Caco-2 (cell line): ENCODE measurements at regions of chr7 and their contacts with region 1.

Region 1: GRCh38 chr7:55086413-55087201 is 67.8 kb downstream of the EGFR start:
- DNase-seq: no peak
- H3K4me3 ChIP-seq: no peak overlapping the region
- H3K4me3 Mint-ChIP-seq: no peak overlapping the region
- H3K27ac Mint-ChIP-seq: no peak overlapping the region
- H3K4me1 ChIP-seq: peaks cover 5% of the 10 kb centered on the region; the same call in 1 of the 2 replicates
- H3K4me1 Mint-ChIP-seq: peaks cover 15% of the 10 kb centered on the region
- H3K27me3 ChIP-seq: no peaks in the 10 kb centered on the region
- H3K27me3 Mint-ChIP-seq: no peaks in the 10 kb centered on the region
- CTCF ChIP-seq: no peak

Region 2: GRCh38 chr7:54969190-54969971 is 117.2 kb before region 1 on chr7:
- CTCF ChIA-PET with region 1: no interaction called
- POLR2A ChIA-PET with region 1: no interaction called
- intact Hi-C with region 1: no loop called
- DNase-seq: no peak
- H3K4me3 ChIP-seq: no peak overlapping the region
- H3K4me3 Mint-ChIP-seq: no peak overlapping the region
- H3K27ac Mint-ChIP-seq: peak overlapping the region; percentile 32
- H3K4me1 ChIP-seq: peaks cover 25% of the 10 kb centered on the region
- H3K4me1 Mint-ChIP-seq: peaks cover 23% of the 10 kb centered on the region
- H3K27me3 ChIP-seq: no peaks in the 10 kb centered on the region
- H3K27me3 Mint-ChIP-seq: no peaks in the 10 kb centered on the region
- CTCF ChIP-seq: no peak

Region 3: DNA sequence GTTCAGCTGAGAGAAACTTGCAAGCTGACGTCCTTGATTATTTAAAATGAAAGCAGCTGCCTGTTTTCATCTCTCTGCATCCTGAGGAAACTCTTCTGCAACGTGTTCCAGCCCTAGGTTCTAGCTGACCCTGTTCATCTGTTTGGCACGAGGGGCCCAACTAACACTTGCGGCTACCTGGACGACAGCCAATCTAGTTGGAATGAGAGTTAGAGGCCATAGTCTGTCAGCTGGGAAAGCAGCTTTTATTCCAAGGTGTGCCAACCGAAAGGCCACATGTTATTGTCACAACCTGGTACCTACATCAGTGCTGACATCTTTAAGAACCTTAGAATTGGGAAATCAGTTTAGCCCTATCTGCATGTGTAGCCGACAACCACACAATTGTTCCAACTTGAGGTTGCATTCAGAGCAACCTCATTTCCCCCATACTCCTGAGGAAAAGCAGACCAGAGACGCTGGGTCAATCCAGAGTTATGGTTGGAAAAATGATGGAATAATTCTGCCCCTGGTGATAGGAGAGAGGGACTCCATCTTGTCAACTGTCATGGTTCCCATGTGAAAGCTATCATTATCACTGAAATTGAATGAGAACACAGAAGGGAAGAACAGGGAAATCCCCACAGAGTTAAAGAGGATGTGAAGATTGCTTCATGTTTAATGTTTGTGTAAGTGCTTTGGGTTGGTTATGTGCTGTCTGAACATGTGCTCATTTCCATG is 53.8 kb after region 1 on chr7:
- CTCF ChIA-PET with region 1: interaction called, 11 read pairs
- POLR2A ChIA-PET with region 1: no interaction called
- intact Hi-C with region 1: no loop called
- DNase-seq: no peak
- H3K4me3 ChIP-seq: no peak overlapping the region
- H3K4me3 Mint-ChIP-seq: no peak overlapping the region
- H3K27ac Mint-ChIP-seq: no peak overlapping the region
- H3K4me1 ChIP-seq: no peaks in the 10 kb centered on the region; the same call in 1 of the 2 replicates
- H3K4me1 Mint-ChIP-seq: no peaks in the 10 kb centered on the region
- H3K27me3 ChIP-seq: no peaks in the 10 kb centered on the region
- H3K27me3 Mint-ChIP-seq: no peaks in the 10 kb centered on the region
- CTCF ChIP-seq: no peak

Region 4: DNA sequence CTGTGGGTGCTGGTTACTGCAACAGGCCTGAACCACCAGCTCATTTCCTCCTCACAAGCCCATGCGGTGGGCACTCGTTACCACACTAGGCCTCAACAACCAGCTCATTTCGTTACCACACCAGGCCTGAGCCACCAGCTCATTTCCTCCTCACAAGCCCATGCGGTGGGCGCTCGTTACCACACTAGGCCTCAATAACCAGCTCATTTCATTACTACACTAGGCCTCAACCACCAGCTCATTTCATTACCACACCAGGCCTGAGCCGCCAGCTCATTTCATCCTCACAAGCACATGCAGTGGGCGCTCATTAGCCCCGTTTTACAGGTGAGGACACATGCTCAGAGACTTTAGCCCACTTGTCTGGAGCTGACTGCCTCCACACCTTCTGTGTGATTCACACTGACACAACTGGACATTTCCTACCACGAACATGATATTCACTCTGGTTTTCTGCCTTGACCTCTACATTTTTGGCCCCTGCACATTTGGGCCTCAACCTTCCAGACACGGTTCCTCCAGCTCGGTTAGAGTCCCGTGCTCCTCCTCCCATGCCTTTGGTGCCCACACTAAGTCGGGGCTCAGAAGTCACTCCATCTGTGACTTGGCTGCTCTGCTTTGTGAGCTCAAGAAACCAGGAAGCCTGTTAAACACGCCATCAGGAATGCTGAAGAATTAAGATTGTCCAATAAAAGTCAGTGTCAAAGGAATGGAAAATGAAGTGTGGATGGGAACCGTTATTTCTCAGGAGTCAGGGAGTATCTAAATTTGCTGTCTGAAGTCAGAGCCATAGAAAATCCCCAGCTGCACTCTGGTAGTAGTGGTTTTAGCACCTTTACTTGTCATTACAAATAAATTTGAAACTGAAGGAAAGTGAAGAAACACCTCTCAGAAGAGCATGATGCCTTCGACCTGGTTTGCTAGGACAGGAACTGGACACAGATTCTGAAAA is 222.7 kb after region 1 on chr7:
- CTCF ChIA-PET with region 1: no interaction called
- POLR2A ChIA-PET with region 1: no interaction called
- intact Hi-C with region 1: no loop called
- DNase-seq: no peak
- H3K4me3 ChIP-seq: no peak overlapping the region
- H3K4me3 Mint-ChIP-seq: no peak overlapping the region
- H3K27ac Mint-ChIP-seq: peak overlapping the region; percentile 92
- H3K4me1 ChIP-seq: peaks cover 23% of the 10 kb centered on the region
- H3K4me1 Mint-ChIP-seq: peaks cover 26% of the 10 kb centered on the region
- H3K27me3 ChIP-seq: no peaks in the 10 kb centered on the region
- H3K27me3 Mint-ChIP-seq: no peaks in the 10 kb centered on the region
- CTCF ChIP-seq: no peak